Activated naive CD4-positive, alpha-beta T cell treated with anti-CD3 and anti-CD28 coated beads, Interleukin-2, amount 10 ng/mL, durations not matched to agents 7 days and 5 days (primary cell): ENCODE measurements at regions of chr4 and their contacts with region 1.

Region 1: DNA sequence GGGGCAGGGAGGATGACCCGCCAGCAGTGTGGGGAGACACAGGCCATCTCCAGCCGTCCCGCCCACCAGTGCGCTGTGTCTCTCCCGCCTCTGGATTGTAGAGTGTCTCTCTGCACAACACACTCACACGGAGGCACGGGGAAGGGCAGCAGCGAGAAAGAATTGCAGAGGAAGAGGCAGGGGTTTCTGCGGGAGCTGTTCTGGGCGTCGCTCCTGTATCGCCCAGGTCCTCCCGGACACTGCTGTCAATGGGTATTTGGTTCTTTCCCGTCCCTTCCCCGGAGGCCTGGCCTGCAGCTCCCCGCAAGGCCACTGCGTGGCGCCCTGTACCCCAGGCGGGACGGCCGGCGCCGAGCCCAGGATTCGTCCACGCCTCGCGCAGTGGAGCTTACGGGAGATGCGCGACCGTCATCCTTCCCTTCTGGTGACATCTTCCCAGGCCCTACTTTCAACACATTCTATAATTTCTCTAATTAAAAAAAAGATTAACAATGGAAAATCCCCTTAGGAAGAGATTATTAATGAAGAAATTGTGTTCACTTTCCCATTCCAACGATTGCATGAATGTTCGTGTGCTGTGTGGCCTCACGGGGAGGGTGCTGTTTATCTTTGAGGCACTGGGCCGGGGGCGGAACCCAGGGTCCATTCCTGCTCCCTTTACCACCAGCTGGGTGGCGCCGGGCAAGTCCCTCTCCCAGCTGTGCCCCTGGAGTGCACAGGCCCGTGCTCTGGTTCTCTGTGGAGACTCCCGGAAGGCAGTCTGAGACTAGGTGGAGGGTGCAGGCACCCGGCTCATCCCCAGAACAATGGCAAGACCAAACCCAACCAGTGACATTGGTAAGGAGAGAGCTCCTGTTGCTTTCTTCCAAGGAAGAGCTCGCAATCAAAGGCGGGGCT is 95.7 kb downstream of the CPZ start:
- DNase-seq: peak; percentile 29
- H3K4me3 Mint-ChIP-seq: no peak overlapping the region
- H3K27ac Mint-ChIP-seq: no peak overlapping the region
- H3K4me1 Mint-ChIP-seq: no peaks in the 10 kb centered on the region
- H3K27me3 Mint-ChIP-seq: peaks cover 11% of the 10 kb centered on the region

Region 2: DNA sequence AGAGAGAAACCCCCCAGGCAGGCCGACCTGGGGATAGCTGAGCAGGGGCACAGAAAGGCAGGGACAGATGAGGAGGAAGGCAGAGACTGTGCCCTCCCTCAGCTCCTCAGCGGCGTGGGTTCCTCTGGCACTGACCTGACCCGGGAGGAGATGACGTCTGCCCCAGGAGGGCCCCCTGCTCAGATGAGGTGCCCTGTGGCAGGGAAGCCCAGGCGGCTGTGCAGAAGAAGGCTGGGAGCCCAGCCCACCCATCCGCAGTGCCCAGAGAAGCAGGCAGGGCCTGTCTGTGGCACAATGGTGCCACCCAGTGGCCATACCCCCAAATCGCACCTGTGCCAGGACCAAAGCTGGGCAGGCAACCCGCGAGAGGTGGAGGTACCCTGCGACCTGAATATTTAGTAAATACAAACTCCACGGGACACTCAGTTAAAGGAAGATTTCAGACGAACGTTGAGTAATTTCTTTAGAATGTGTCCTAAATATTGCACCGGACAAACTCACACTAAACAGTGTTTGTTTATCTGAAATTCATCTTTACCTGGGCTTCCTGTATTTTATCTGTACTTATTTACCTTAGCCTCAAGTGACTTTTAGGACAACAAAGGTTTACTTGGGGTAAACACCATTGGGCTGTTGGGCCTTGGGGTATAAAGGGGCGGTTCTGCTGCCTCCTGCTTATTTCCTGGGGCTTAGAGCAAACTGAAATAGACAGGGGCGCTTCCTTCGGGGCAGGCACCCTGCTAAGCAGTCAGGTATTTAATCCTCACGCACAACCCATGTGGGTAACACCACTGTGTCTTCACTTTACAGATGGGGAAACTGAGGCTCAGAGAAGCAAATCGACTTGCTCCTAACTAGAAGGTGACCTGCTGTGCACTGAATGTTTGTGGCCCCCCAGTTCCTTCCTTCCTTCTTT is 229.8 kb after region 1 on chr4:
- CTCF ChIA-PET with region 1: interaction called, 13 read pairs
- DNase-seq: peak; percentile 70
- H3K4me3 Mint-ChIP-seq: no peak overlapping the region
- H3K27ac Mint-ChIP-seq: no peak overlapping the region
- H3K4me1 Mint-ChIP-seq: no peaks in the 10 kb centered on the region
- H3K27me3 Mint-ChIP-seq: peaks cover 6% of the 10 kb centered on the region